Left colon (tissue), 2 donors: ENCODE measurements at regions of chr7 and their contacts with region 1.

Region 1: GRCh38 chr7:132580717-132581285 is 4.5 kb upstream of the PLXNA4 start:
- DNase-seq: peak; percentile 56 to 68
- ATAC-seq: peak; percentile 90

Region 2: DNA sequence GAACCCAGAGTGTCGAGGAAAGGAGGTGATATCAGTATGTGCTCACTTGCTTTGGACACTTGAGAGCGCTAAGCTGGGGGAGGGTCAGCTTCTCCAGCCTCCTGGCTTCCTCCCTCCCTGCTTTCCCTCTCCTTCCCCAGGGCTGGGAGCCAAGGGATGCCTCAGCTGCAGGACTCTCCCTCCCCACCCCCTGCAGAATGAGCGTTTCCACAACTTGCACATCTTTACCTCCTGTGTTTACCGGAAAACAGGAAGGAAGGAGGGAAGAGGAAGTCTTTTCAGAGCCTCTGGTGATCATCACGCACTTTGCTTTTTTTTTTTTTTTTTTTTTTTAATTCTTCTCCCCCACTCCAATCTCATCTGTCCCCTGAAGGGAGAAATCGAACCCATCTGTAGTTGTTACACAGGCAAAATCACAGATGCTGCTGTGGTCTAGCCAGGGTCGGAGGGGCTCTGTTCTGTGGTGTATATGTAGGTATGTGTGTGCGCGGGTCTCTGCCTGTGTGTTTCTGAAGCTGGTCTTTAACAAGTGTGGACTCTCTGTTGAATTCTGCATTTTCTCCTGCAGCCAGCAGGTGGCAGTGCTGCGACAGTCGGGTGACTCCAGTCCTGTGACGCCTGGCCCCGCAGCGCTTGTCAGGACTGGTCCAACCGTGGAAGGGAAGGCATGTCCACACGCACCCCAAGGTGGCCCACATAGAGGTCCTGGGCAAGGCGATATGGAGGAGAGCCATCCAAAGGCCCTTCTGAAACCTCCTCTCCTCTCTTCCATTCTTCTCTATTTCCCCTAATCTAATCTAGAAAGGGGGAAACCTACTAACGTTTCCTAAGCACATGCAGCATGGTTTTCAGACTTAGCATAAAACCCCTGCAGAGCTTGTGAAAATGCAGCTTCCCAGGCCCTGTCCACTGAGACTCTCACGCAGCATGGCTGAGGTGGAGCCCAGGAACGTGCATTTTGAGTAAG is 262.2 kb before region 1 on chr7:
- intact Hi-C with region 1: loop called in 1 of 2 experiments (anchors 2 kb)
- DNase-seq: peak; percentile 79 to 81
- ATAC-seq: peak; percentile 90

Region 3: DNA sequence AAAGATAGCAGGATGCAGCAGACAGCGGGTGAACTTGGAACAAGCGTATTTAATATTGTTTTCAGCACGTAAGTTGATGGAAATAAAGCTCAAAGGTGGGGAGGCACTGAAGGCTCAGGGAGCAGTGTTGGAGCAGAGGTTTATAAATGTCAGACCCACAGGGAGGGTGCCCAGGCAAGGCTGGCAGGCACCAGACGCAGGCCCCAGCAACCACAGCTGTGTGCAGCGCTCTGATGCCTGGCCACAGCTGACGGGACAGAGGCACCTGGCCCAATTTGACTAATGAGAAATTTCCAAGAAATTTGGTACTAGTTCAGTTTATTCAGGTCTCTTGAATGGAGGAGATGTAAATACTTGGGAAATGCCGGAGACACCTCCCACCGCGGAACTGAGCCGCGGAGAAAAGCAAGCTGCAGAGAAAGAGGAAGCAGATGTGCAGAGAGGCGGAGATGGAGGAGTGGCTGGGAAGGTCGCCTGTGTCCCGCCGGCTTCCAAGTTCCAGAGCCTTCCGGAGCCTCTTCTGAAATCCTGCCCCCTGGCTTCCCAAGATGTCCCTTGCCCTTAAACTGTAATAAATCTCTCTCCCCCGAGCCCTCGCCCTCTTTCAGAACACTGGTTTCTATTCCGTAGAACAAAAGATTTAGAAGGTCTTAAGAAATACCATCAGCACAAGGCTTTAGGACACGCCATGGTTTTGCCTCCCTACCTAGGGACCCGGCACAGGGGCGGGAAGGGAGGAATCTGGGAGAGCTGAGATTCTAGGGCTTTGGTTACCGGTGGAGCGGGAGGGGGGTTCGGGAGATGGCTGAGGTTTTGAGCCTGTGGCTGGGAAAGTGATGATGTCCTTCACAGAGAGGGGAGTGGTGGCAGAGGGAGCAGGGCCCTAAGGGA is 33.9 kb after region 1 on chr7:
- intact Hi-C with region 1: no loop called
- DNase-seq: peak in 1 of 2 donors; percentile 8
- ATAC-seq: no peak